Naive thymus-derived CD8-positive, alpha-beta T cell (primary cell): ENCODE measurements at regions of chr6 and their contacts with region 1.

Region 1: GRCh38 chr6:26234421-26235296 is 130.3 kb upstream of the BTN3A2 start:
- DNase-seq: peak; percentile 41 to 91 (median 86)
- ATAC-seq: peak; percentile 69
- H3K4me3 Mint-ChIP-seq: peak overlapping the region; percentile 91 to 99 (median 95)
- H3K27ac Mint-ChIP-seq: peak overlapping the region; percentile 95 to 100 (median 97)
- H3K4me1 Mint-ChIP-seq: peaks cover 12 to 37% (median 32%) of the 10 kb centered on the region in 4 donors
- H3K27me3 Mint-ChIP-seq: no peaks in the 10 kb centered on the region

Region 2: DNA sequence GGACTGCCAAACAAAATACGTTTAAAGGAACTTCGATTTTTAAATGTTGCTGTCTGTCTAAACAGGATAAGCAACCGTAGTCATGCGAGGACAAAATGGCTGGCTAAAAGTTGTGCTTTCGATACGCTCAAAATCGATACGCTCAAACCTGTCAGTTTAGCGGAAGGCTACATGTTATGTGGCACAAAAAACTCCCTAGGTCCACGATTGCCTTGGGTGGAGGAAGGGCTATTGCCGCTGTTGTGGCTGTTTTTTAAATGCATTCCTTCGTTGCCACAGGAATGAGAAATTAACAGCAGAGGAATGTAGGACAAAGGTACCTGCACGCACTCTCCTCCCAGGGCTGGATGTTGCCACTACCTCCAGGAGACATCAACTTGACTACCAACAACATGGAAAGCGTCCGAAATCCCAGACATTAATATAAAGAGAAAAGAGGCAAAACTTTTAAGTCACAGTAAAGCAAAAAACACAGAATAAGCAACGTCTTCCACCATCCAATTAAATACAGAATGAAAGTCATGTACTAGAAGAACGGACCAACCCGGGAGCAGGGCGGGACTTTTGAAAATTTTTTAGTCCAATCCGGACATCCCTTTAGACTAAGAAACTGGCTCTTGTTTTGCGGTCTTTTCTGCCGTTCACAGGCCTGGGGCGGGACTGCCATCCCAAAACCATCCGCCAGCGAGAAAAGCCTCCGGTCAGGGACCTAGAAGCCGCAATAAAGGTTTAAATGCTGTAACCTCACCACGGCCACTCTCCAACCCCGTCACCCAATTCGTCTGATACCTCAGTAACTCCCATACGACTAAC is 179.6 kb before region 1 on chr6:
- POLR2A ChIA-PET with region 1: interaction called, 10 read pairs
- DNase-seq: peak; percentile 63 to 95 (median 87)
- ATAC-seq: peak; percentile 65 to 70
- H3K4me3 Mint-ChIP-seq: peak overlapping the region; percentile 93 to 99 (median 96)
- H3K27ac Mint-ChIP-seq: peak overlapping the region; percentile 93 to 99 (median 99)
- H3K4me1 Mint-ChIP-seq: peaks cover 9 to 34% (median 21%) of the 10 kb centered on the region in 4 donors
- H3K27me3 Mint-ChIP-seq: no peaks in the 10 kb centered on the region

Region 3: GRCh38 chr6:26183581-26184366 is 50.9 kb before region 1 on chr6:
- POLR2A ChIA-PET with region 1: interaction called, 76 read pairs
- DNase-seq: peak; percentile 22 to 82 (median 58)
- ATAC-seq: peak; percentile 92 to 94
- H3K4me3 Mint-ChIP-seq: peak overlapping the region; percentile 93 to 100 (median 98)
- H3K27ac Mint-ChIP-seq: peak overlapping the region; percentile 70 to 98 (median 95)
- H3K4me1 Mint-ChIP-seq: peaks cover 27 to 48% (median 46%) of the 10 kb centered on the region in 4 donors
- H3K27me3 Mint-ChIP-seq: no peaks in the 10 kb centered on the region

Region 4: DNA sequence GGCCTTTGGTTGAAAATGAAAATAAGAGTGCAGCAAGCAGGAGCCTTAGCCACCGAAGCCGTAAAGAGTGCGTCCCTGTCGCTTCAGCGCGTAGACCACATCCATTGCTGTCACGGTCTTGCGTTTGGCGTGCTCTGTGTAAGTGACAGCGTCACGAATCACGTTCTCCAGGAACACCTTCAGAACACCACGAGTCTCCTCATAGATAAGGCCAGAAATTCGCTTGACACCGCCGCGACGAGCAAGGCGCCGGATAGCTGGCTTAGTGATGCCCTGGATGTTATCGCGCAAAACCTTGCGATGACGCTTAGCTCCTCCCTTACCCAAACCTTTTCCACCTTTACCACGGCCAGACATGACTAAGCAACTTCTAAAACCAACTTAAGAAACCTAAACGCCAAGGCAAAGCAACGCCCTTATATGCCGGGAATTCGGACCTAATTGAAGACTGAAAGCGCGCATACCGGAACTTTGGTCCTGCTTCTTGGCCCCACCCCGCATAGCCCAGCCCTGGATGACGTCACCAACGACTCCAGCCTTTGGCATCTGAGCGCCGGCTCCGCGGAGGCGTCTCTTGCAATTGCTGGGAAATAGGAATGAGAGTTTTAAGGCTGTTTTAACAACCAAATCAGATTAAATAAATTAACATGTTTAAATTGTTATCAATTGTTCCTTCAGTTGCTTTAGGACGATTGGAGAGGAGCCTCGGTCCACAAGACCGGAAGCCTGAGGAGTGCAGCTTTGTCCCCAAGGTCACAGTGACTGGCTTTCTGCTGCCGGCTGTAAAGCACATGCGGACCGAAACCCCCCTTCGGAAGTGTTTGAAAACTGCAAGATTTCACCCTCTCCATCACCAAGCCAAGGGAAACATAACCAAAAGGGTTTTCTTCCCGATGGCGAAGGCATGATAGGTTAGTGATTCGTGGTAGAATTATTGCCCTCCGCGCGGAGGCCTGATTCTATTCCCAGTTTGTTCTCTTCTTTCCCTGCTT is 50.8 kb after region 1 on chr6:
- POLR2A ChIA-PET with region 1: interaction called, 115 read pairs
- DNase-seq: peak; percentile 80 to 99 (median 93)
- ATAC-seq: peak; percentile 77 to 87
- H3K4me3 Mint-ChIP-seq: peak overlapping the region; percentile 84 to 96 (median 91)
- H3K27ac Mint-ChIP-seq: peak overlapping the region; percentile 95 to 100 (median 98)
- H3K4me1 Mint-ChIP-seq: peaks cover 19 to 36% (median 29%) of the 10 kb centered on the region in 4 donors
- H3K27me3 Mint-ChIP-seq: peaks cover 0 to 7% (median 0%) of the 10 kb centered on the region in 5 donors

Region 5: DNA sequence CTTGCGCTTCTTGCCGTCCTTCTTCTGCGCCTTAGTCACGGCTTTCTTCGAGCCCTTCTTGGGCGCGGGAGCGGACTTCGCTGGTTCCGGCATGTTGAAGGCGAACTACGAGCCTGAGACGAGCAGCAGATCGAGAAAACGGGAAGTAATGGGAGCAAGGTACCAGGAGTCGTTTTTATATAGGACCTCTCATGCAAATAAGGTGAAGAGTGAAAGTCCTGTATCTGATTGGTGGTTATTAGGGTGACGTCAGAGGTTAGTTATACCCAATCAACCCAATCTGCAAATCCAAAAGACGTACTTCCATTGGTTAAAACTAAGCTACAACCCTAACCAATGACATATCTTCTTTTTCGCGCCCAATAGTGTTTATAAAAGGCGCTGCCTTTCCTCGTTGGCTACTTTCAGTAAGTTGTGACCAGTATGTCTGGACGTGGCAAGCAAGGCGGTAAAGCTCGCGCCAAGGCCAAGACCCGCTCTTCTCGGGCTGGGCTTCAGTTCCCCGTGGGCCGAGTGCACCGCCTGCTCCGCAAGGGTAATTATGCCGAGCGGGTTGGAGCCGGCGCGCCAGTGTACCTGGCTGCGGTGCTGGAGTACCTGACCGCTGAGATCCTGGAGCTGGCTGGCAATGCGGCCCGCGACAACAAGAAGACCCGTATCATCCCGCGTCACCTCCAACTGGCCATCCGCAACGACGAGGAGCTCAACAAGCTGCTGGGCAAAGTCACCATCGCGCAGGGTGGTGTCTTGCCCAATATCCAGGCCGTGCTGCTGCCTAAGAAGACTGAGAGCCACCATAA is 912.2 kb after region 1 on chr6:
- POLR2A ChIA-PET with region 1: interaction called, 30 read pairs
- DNase-seq: peak; percentile 37 to 94 (median 82)
- ATAC-seq: peak; percentile 85 to 88
- H3K4me3 Mint-ChIP-seq: no peak overlapping the region
- H3K27ac Mint-ChIP-seq: no peak overlapping the region
- H3K4me1 Mint-ChIP-seq: peaks cover 3 to 25% (median 12%) of the 10 kb centered on the region in 4 donors
- H3K27me3 Mint-ChIP-seq: no peaks in the 10 kb centered on the region